CD4-positive, alpha-beta memory T cell (primary cell): ENCODE measurements at regions of chr15 and their contacts with region 1.

Region 1: DNA sequence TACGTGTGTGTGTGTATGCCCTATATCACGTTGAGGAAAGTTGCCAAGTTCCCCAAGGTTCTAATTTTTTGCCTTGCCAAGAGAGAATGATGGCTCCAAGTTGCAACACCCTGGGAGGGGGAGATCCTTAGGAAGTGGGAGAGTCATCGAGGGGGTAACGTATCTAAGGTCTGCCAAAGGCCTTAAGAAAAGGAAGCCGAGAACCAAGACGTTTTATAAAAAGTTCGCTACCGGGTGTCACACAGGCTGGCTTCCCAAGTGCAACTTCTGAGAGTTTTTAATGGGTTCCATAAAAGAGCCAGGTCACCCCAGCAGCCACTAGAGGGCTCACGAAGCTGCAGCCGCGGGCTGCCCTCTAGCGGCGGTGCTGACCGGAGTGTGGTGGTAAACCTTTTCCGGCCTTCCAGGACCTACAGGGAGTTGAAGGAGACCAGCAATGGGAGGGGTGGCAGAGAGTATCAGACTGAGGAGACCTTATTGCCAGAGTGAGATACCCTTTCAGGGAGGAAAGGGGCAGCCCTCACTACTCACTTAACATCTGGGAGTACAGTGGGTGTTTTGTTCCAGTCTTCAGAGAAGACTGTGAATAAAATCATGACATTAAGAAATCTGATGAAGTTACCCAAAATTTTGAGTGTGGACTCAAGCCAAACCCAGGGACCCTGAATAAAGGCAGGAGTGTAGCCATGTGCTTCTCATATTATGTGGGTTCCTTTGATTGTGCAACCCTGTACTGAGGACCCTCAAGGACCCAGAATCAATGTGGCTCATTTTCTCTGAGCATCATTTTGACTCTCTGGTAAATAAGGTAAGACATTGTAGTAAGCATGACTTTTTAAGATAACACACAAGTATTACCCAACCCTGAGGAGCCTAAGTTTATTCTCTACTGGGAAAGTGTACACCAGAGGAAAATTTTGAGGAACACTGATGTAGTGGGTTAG is 2.5 kb upstream of the RFX7 start:
- DNase-seq: peak; percentile 82 to 85 (median 84)
- H3K4me3 ChIP-seq: peak overlapping the region; percentile 19 to 81
- H3K4me3 Mint-ChIP-seq: peak overlapping the region; percentile 84 to 97 (median 90)
- H3K27ac ChIP-seq: peak overlapping the region; percentile 53
- H3K27ac Mint-ChIP-seq: peak overlapping the region; percentile 88 to 97 (median 92)
- H3K4me1 ChIP-seq: peaks cover 35% of the 10 kb centered on the region
- H3K4me1 Mint-ChIP-seq: peaks cover 22 to 39% (median 31%) of the 10 kb centered on the region in 4 donors
- H3K27me3 ChIP-seq: no peaks in the 10 kb centered on the region
- H3K27me3 Mint-ChIP-seq: peaks cover 0 to 2% of the 10 kb centered on the region in 2 donors

Region 2: DNA sequence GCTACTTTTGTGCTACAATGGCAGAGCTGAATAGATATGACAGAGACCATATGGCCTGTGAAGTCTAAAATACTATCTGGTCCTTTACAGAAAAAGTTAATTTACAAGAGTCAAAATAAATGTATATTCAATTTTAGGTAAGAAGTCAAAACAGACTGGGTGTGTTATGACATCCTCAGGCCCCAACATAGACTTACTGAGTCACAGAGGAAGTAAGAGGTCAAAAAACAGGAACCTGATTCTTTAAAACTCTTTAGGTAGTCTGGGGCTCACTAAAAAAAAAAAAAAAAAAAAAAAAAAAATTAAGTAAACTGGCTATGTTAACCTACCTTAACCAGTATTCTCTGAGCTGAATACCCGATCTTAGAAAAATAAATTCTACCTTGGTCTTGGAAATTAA is 751.2 kb before region 1 on chr15:
- CTCF ChIA-PET with region 1: no interaction called
- POLR2A ChIA-PET with region 1: no interaction called
- intact Hi-C with region 1: loop called (anchors 5 kb)
- DNase-seq: no peak
- H3K4me3 ChIP-seq: no peak overlapping the region
- H3K4me3 Mint-ChIP-seq: no peak overlapping the region
- H3K27ac ChIP-seq: no peak overlapping the region
- H3K27ac Mint-ChIP-seq: no peak overlapping the region
- H3K4me1 ChIP-seq: peaks cover 5% of the 10 kb centered on the region
- H3K4me1 Mint-ChIP-seq: peaks cover 5 to 9% (median 7%) of the 10 kb centered on the region in 4 donors
- H3K27me3 ChIP-seq: no peaks in the 10 kb centered on the region
- H3K27me3 Mint-ChIP-seq: no peaks in the 10 kb centered on the region

Region 3: DNA sequence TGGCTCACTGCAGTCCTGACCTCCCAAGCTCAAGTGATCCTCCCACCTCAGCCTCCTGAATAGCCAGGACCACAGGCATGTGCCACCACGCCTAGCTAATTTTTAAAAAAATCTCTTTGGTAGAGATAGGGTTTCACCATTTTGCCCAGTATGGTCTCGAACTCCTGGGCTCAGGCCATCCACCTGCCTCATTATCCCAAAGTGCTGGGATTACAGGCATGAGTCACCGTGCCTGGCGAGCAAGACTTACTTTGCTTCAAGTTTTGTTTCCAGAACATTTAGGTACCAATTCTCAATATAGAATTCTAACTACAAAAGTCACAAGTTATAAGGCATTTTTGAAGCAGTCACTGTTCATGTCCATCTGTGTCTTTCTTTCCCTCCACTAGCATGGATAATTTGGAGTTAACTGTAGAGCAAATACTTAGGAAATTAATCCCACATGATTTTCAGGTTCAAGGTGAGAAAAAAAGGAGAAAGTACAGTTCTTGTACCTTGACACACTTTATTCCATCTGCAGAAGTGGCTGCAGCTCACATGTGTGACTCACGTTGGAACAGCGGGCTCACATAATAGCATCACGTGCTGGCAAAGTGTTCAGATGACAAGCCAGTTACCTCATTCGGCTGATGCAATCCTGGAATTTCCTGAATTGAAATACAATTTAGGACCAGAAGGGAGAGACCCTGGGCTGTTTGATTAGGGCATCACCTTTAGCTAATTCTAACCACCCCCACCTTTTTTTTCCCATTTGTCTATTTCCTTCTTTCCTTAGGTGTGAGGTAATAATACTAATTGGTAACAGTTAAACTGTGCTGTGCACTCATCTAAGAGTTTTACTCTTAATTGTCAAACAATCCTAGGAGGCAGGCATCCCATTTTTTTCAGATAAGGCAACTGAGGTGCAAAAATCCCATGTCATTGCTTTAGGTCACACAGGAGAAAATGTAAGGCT is 205.8 kb before region 1 on chr15:
- CTCF ChIA-PET with region 1: interaction called, 5 read pairs
- POLR2A ChIA-PET with region 1: interaction called, 7 read pairs
- intact Hi-C with region 1: loop called (anchors 2 kb)
- DNase-seq: peak in 1 of 5 donors; percentile 49
- H3K4me3 ChIP-seq: no peak overlapping the region
- H3K4me3 Mint-ChIP-seq: no peak overlapping the region
- H3K27ac ChIP-seq: no peak overlapping the region
- H3K27ac Mint-ChIP-seq: no peak overlapping the region
- H3K4me1 ChIP-seq: peaks cover 43% of the 10 kb centered on the region
- H3K4me1 Mint-ChIP-seq: peaks cover 27 to 52% (median 40%) of the 10 kb centered on the region in 4 donors
- H3K27me3 ChIP-seq: no peaks in the 10 kb centered on the region
- H3K27me3 Mint-ChIP-seq: no peaks in the 10 kb centered on the region

Region 4: DNA sequence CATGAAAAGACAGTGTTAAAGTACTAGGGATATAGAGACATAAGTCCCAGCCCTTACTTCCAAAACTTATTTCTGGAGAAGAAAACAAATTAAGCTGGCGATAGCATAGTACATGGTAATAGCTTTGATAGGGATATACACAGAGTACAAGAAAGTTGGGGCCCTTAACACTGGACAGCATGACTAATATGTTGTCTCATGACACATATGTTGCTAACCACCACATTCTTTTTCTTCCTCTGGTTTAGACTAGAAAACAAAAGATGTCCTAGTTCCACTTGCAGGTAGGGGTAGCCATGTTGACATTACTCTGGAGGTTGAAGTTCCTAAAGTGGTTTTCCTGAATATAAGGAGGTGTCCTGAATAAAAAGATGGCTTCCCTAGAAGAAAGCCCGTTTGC is 77.7 kb before region 1 on chr15:
- CTCF ChIA-PET with region 1: interaction called, 23 read pairs
- POLR2A ChIA-PET with region 1: interaction called, 23 read pairs
- intact Hi-C with region 1: no loop called
- DNase-seq: no peak
- H3K4me3 ChIP-seq: no peak overlapping the region
- H3K4me3 Mint-ChIP-seq: no peak overlapping the region
- H3K27ac ChIP-seq: no peak overlapping the region
- H3K27ac Mint-ChIP-seq: peak overlapping the region in 3 of 7 donors; percentile 12 to 43 (median 37)
- H3K4me1 ChIP-seq: peaks cover 53% of the 10 kb centered on the region
- H3K4me1 Mint-ChIP-seq: peaks cover 33 to 73% (median 54%) of the 10 kb centered on the region in 4 donors
- H3K27me3 ChIP-seq: no peaks in the 10 kb centered on the region
- H3K27me3 Mint-ChIP-seq: no peaks in the 10 kb centered on the region

Region 5: DNA sequence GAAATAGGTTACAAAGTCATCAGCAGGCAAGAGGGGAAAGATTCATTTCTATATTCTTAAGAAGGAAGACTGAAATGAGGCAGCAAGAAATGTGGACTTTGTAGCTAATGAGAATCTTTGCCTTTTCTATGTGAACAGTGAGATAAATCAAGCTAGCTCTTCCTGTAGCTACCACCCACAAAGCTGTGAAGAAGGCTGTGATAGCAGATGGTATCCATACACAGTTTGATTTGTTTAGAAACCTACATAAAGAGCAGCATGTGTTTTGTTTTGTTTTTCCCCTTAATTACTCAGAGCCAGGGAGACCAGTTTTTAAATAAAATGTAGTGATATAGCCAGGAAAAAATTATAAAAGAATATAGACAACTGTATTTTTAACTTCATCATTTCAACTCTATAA is 164.6 kb after region 1 on chr15:
- CTCF ChIA-PET with region 1: no interaction called
- POLR2A ChIA-PET with region 1: no interaction called
- intact Hi-C with region 1: no loop called
- DNase-seq: no peak
- H3K4me3 ChIP-seq: no peak overlapping the region
- H3K4me3 Mint-ChIP-seq: no peak overlapping the region
- H3K27ac ChIP-seq: no peak overlapping the region
- H3K27ac Mint-ChIP-seq: no peak overlapping the region
- H3K4me1 ChIP-seq: no peaks in the 10 kb centered on the region
- H3K4me1 Mint-ChIP-seq: no peaks in the 10 kb centered on the region
- H3K27me3 ChIP-seq: no peaks in the 10 kb centered on the region
- H3K27me3 Mint-ChIP-seq: peaks cover 0 to 2% of the 10 kb centered on the region in 2 donors

Region 6: GRCh38 chr15:56428821-56429458 is 182.8 kb after region 1 on chr15:
- CTCF ChIA-PET with region 1: interaction called, 3 read pairs
- POLR2A ChIA-PET with region 1: no interaction called
- intact Hi-C with region 1: loop called (anchors 2 kb)
- DNase-seq: peak in 4 of 5 donors; percentile 0 to 18 (median 6)
- H3K4me3 ChIP-seq: no peak overlapping the region
- H3K4me3 Mint-ChIP-seq: no peak overlapping the region
- H3K27ac ChIP-seq: no peak overlapping the region
- H3K27ac Mint-ChIP-seq: no peak overlapping the region
- H3K4me1 ChIP-seq: no peaks in the 10 kb centered on the region
- H3K4me1 Mint-ChIP-seq: no peaks in the 10 kb centered on the region
- H3K27me3 ChIP-seq: no peaks in the 10 kb centered on the region
- H3K27me3 Mint-ChIP-seq: peaks cover 2 to 9% of the 10 kb centered on the region in 2 donors